Activated CD4-positive, alpha-beta T cell treated with anti-CD3 and anti-CD28 coated beads, Interleukin-2, amount 10 ng/mL, durations not matched to agents 24 days and 14 days (primary cell): ENCODE measurements at regions of chr13 and their contacts with region 1.

Region 1: GRCh38 chr13:52194184-52194868 is 34.9 kb upstream of the NEK3 start:
- DNase-seq: peak; percentile 97
- H3K4me3 Mint-ChIP-seq: peak overlapping the region; percentile 96
- H3K27ac Mint-ChIP-seq: peak overlapping the region; percentile 98
- H3K4me1 Mint-ChIP-seq: peaks cover 22% of the 10 kb centered on the region
- H3K27me3 Mint-ChIP-seq: no peaks in the 10 kb centered on the region

Region 2: GRCh38 chr13:50561739-50562138 is 1632.6 kb before region 1 on chr13:
- intact Hi-C with region 1: no loop called
- DNase-seq: no peak
- H3K4me3 Mint-ChIP-seq: no peak overlapping the region
- H3K27ac Mint-ChIP-seq: no peak overlapping the region
- H3K4me1 Mint-ChIP-seq: no peaks in the 10 kb centered on the region
- H3K27me3 Mint-ChIP-seq: peaks cover 49% of the 10 kb centered on the region

Region 3: GRCh38 chr13:51246418-51247277 is 947.7 kb before region 1 on chr13:
- intact Hi-C with region 1: no loop called
- DNase-seq: no peak
- H3K4me3 Mint-ChIP-seq: no peak overlapping the region
- H3K27ac Mint-ChIP-seq: no peak overlapping the region
- H3K4me1 Mint-ChIP-seq: no peaks in the 10 kb centered on the region
- H3K27me3 Mint-ChIP-seq: no peaks in the 10 kb centered on the region

Region 4: DNA sequence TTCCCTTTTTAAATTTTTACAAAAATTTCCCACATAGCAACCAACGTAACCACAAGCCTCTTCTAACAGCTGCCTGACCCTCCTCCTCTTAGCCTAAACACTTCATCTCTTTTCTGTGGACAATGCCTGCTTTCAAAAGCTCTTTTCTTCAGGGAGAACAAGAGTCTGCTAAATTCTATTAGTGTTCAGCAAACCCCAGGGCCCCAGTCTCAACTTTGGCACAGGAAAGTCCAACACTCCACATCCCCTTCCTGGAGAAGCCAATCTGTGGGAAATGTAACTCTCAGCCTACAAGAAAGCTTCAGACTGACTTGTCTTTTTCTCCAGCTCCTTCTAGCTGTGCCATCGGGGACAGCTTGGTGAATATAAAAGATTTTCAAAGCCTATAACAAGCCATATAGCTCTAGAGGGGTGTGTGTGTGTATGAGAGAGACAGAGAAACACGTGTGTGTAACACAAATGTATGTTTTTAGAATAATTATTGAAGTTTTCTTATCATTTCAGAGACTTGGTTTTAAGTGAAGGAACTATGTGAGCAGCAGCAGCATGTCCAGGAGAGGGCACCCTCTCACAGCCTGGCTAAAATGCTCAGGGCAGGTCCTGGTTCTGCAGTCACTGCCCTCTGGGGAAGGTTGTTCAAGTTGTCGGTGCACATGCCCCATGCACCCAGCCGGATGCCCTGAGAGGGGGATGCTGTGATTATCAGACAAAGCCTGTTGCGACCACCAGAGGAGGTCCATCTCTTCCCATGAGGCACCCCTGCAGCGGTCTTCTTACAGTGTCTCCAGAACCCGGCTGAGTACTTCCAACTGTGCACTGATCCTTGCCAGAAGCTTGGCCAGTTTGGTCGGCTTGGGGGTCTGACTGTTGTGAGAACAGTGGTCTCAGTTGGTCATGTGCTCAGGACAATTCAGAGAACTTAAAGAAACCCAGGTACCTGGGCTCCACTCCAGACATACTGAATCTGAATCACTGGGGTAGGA is 298.1 kb before region 1 on chr13:
- intact Hi-C with region 1: loop called (anchors 5 kb)
- DNase-seq: peak; percentile 83
- H3K4me3 Mint-ChIP-seq: no peak overlapping the region
- H3K27ac Mint-ChIP-seq: no peak overlapping the region
- H3K4me1 Mint-ChIP-seq: no peaks in the 10 kb centered on the region
- H3K27me3 Mint-ChIP-seq: peaks cover 13% of the 10 kb centered on the region

Region 5: GRCh38 chr13:52127783-52128702 is 66.3 kb before region 1 on chr13:
- intact Hi-C with region 1: loop called (anchors 2 kb)
- DNase-seq: peak; percentile 89
- H3K4me3 Mint-ChIP-seq: peak overlapping the region; percentile 89
- H3K27ac Mint-ChIP-seq: no peak overlapping the region
- H3K4me1 Mint-ChIP-seq: peaks cover 22% of the 10 kb centered on the region
- H3K27me3 Mint-ChIP-seq: peaks cover 16% of the 10 kb centered on the region

Region 6: GRCh38 chr13:52450012-52450792 is 255.9 kb after region 1 on chr13 and contains the start of gene VPS36:
- intact Hi-C with region 1: loop called (anchors 2 kb)
- DNase-seq: peak; percentile 99
- H3K4me3 Mint-ChIP-seq: peak within 1 kb of the TSS; percentile 93
- H3K27ac Mint-ChIP-seq: peak within 1 kb of the TSS; percentile 92
- H3K4me1 Mint-ChIP-seq: peaks cover 33% of the 10 kb centered on the region
- H3K27me3 Mint-ChIP-seq: no peaks in the 10 kb centered on the region
- total RNA-seq, gene VPS36: 42.0 and 43.0 TPM in 2 replicates

Region 7: DNA sequence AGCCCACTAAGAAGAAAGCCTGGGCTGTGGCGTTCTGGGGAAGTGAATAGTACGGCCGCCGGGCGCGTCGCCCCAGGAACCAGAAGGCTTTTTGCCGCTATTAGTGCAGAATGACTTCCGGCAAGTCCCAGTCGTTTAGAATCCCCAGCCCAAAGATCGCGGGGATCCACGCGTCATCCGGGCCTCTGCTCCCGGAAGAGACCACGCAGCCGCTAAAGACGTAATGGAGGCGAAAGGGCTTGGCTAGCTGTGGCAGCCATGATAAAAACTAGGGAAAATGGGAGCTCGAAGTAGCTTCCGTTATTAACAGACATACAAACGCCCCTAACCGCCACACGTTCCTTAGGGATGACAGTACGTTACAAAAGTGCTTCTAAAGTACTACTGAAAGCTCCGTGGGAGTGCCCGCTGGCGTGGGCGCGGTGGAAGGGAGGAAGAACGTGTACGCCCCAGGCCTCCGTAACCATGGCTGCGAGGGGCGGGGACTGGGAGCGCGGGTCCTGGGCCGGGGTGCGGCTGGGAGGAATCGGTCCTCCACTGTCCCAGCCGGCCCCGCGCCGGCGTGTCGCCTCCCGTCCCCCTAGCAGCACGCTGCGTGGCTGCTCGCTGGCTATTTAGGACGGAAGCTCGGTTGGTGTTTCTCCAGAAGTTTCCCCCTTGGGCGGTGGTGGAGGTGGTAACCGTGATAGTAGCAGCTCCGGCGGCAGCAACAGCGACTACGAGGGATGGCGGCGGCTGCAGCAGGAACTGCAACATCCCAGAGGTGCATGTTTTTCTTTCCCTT is 458.1 kb after region 1 on chr13 and contains the start of gene SUGT1:
- intact Hi-C with region 1: loop called (anchors 2 kb)
- DNase-seq: peak; percentile 98
- H3K4me3 Mint-ChIP-seq: no peak within 1 kb of the TSS
- H3K27ac Mint-ChIP-seq: no peak within 1 kb of the TSS
- H3K4me1 Mint-ChIP-seq: peaks cover 15% of the 10 kb centered on the region
- H3K27me3 Mint-ChIP-seq: no peaks in the 10 kb centered on the region
- total RNA-seq, gene SUGT1: 71.2 and 77.8 TPM in 2 replicates

Region 8: DNA sequence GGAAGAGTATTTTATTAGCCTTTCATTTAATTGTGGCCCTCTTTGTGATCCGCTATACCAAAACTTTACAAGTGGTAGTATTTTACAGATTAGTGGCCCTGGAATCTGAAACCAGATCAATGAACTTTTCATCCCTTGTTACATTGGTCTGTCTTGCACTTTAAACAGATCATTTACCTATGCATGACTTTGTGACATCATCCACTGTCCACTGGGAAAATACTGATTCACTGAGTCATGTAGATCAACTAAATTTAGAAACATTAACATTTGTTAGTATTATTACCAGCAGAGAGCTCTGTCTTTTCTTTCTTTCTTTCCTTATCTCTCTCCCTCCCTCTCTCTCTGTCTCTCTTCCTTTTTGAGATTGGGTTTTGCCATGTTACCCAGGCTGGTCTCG is 636.6 kb after region 1 on chr13:
- intact Hi-C with region 1: no loop called
- DNase-seq: no peak
- H3K4me3 Mint-ChIP-seq: no peak overlapping the region
- H3K27ac Mint-ChIP-seq: no peak overlapping the region
- H3K4me1 Mint-ChIP-seq: no peaks in the 10 kb centered on the region
- H3K27me3 Mint-ChIP-seq: peaks cover 3% of the 10 kb centered on the region